CD8-positive, alpha-beta memory T cell (primary cell): ENCODE measurements at regions of chr17 and their contacts with region 1.

Region 1: DNA sequence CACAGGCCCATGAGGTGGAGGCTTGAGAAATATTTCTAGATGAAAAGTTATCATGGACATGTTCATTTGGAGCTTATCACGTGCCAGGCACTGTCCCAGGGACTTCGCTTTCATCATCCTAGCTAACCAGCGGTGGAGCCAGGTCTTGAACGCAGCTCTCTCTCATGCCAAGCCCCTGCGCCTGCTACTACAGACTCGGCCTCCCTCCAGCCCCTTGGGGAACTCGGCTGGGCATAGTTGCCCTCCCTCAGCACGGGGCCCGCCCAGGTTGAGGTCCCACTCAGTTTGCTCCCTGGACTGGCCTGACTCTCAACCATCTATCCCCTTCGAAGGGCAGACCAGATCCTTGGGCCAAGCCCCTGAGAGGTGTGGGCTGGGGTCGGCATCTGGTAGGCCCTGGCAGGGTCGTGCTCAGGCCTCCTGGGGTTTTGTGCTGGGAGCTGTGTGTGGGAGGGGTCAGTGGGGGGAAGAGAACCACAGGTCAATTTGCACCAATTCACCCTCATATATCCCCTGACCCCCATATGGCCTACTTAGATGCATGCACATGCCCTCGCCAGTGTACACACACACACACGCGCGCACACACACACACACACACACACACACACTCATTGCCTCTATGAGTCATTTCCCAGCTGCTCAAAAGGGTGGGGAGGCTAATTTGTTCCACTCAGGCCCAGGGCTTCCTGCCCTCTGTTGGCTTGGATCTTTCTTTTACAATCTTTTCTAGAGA is 12.1 kb upstream of the SCN4A start:
- DNase-seq: peak in 4 of 5 donors; percentile 51 to 64 (median 59)
- H3K4me3 ChIP-seq: no peak overlapping the region
- H3K4me3 Mint-ChIP-seq: peak overlapping the region in 6 of 7 donors; percentile 3 to 61 (median 30)
- H3K27ac ChIP-seq: no peak overlapping the region
- H3K27ac Mint-ChIP-seq: peak overlapping the region; percentile 61 to 78 (median 75)
- H3K4me1 ChIP-seq: peaks cover 11% of the 10 kb centered on the region
- H3K4me1 Mint-ChIP-seq: peaks cover 20 to 26% (median 24%) of the 10 kb centered on the region in 3 donors
- H3K27me3 ChIP-seq: no peaks in the 10 kb centered on the region
- H3K27me3 Mint-ChIP-seq: no peaks in the 10 kb centered on the region

Region 2: DNA sequence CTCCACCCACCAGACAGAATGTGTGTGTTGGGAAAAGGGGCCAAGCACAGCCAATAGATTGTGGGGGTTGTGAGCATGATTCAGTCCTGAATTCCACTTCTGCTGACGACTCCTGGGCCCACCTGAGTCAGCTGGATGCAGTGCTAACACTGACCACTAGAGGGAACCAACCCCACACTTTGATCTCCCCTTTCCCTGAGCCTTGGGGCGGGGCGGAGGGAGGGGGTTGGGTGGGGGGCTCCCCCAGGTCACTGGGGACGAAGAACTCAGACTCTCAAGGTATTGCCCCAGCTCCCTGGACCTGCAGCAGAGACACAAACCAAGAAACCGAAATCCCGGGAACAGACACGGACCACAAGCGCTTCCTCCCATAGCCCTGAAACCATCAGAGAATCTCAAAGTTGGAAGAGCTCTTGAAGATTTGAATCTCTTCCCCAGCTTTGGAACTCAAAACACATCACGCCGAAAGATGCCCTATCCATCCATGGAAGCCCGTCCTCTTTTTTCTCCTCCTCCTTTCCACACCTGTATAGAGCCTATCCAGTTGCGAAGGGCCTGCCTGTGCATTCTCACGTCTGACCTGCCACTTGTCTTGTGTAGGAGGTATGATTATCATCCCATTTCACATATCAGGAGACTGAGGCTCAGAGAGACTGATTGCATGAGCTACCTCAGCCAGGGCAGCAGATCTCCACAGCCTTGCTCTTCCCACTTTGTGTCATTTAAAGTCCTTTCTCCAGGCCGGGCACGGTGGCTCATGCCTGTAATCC is 73.0 kb before region 1 on chr17:
- CTCF ChIA-PET with region 1: interaction called, 18 read pairs
- POLR2A ChIA-PET with region 1: no interaction called
- DNase-seq: peak; percentile 51 to 75 (median 58)
- H3K4me3 ChIP-seq: no peak overlapping the region
- H3K4me3 Mint-ChIP-seq: no peak overlapping the region
- H3K27ac ChIP-seq: no peak overlapping the region
- H3K27ac Mint-ChIP-seq: peak overlapping the region in 2 of 8 donors; percentile 17 to 47
- H3K4me1 ChIP-seq: no peaks in the 10 kb centered on the region
- H3K4me1 Mint-ChIP-seq: peaks cover 0 to 2% (median 0%) of the 10 kb centered on the region in 3 donors
- H3K27me3 ChIP-seq: no peaks in the 10 kb centered on the region
- H3K27me3 Mint-ChIP-seq: peaks cover 0 to 1% of the 10 kb centered on the region in 2 donors

Region 3: GRCh38 chr17:64051153-64051552 is 66.3 kb after region 1 on chr17:
- CTCF ChIA-PET with region 1: interaction called, 10 read pairs
- POLR2A ChIA-PET with region 1: no interaction called
- DNase-seq: peak in 2 of 5 donors; percentile 53 to 66
- H3K4me3 ChIP-seq: peak overlapping the region; percentile 35
- H3K4me3 Mint-ChIP-seq: peak overlapping the region in 6 of 7 donors; percentile 21 to 84 (median 70)
- H3K27ac ChIP-seq: peak overlapping the region; percentile 38
- H3K27ac Mint-ChIP-seq: peak overlapping the region; percentile 61 to 96 (median 92)
- H3K4me1 ChIP-seq: peaks cover 45% of the 10 kb centered on the region
- H3K4me1 Mint-ChIP-seq: peaks cover 47 to 65% (median 60%) of the 10 kb centered on the region in 3 donors
- H3K27me3 ChIP-seq: no peaks in the 10 kb centered on the region
- H3K27me3 Mint-ChIP-seq: no peaks in the 10 kb centered on the region

Region 4: DNA sequence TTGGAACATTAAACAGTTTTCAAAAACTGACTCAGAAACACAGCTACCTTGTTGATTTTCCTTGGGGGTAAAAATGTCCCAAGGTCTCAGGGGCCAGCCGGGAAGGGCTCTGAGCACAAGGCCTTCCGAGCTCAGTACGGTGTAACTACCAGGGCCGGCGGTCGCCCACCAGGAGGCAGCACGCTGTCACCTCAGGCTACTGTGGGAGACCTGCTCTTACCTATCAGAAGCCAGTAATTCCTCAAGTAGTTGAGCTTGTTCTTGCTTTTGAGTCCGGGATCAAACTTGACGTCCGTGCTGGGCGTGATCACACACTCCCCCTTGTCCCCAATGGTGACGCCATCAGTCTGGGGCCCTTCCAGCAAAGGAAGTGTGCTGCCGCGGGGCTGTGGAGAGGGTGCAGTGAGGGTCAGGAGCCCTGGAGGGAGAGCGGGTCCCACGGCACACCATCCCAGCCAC is 79.0 kb after region 1 on chr17:
- CTCF ChIA-PET with region 1: no interaction called
- POLR2A ChIA-PET with region 1: interaction called, 10 read pairs
- DNase-seq: peak; percentile 27 to 66 (median 52)
- H3K4me3 ChIP-seq: no peak overlapping the region
- H3K4me3 Mint-ChIP-seq: peak overlapping the region in 6 of 7 donors; percentile 86 to 95 (median 93)
- H3K27ac ChIP-seq: no peak overlapping the region
- H3K27ac Mint-ChIP-seq: peak overlapping the region in 7 of 8 donors; percentile 88 to 98 (median 97)
- H3K4me1 ChIP-seq: peaks cover 84% of the 10 kb centered on the region
- H3K4me1 Mint-ChIP-seq: peaks cover 55 to 93% (median 92%) of the 10 kb centered on the region in 3 donors
- H3K27me3 ChIP-seq: no peaks in the 10 kb centered on the region
- H3K27me3 Mint-ChIP-seq: peaks cover 0 to 1% of the 10 kb centered on the region in 2 donors